Cardiac septum (tissue), 1 donor: ENCODE measurements at regions of chr2 and their contacts with region 1.

Region 1: DNA sequence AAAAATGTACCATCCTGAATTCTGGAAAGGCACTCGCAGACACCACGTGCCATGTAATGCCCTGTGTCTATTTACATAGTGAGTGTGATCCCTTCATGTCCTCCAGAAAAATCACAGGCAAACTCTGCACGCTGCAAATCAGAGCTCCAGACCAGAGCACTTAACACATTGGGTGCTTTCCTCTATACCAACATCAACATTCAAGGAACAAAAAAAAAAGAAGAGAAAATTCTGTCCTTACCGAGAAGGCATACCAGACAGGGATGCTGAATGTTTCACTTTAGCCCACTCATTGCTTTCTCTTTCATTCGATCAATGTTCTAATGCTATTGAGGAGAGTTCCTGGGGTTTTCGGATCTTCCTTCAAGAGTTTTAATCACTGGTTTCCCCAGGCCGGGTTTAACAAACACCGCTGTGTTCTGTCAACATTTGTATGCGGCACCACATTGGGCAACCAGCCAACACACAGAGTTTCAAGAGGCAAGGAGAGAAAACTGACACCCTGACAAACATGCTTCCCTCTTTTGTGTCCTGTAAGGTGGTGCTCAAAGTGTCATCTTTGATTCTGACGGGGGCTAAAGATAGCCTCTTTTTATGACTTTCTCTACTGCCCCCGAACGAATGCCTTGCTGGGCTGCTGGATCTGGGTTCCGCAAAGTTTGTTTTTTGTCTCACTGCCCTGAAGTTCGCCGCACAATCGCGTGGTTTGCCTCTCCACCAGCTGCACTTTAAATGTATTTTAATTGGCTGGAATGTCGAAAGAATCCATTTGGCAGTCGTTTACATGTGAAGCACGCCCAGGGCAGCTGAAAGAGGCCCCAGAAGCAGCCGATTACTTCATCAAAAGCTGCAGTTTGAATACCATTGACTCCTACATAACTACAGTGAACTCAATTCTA is 106.4 kb upstream of the NCKAP5 start:
- DNase-seq: no peak

Region 2: DNA sequence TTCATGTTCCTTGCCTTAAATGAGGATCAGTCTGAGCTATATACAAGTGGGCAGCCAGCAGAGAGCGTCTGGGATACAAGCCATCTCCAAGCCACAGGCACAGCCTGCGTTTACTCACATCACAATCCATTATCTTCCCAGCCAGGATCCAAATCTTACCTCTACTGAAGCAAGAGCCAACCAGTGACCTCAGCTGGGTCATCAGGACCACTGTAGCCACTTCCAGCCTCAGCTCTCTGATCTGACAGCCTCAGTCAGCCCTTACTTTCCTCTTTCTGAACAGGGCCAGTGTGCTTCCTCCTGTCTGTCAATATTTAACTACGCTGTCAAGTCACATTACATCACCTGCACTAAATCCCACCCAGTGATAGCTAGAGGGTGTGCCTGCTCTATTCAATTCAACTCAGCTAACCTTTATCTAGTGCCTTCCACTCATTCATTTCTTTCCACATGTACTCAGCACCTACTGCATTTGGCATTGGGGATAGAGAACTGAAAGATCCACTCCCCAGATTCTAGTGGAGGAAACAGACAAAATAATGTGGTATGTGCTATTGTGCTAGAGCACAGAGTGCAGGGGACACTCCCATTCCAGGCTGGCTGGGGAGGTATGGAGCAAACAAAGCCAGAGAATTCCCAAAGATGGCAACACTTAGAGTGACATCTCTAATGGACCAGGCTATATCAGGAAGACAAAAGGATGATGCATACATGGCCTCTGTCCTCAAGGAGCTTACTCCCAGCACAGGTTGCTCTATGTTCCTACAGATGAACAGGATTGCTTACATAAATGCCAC is 253.0 kb before region 1 on chr2:
- intact Hi-C with region 1: loop called (anchors 10 kb)
- DNase-seq: no peak

Region 3: DNA sequence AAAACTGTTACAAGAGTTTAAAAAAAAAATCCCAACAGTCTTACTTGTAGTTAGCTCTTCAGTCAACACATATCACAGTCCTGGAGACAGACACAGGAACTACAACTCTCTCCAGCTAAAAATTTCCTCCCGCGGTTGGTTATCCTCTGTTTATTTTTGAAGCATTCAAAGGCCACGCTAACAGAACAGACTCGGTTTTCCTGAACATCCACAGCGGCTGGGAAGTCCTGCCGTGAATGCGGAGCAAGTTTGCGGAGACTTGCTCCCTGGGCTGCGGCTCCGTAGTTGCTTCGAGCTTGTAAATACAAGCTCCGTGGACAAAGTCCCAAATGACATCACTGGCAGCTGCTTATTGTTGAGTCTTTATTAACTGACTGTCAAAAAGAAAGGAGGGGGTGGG is 106.5 kb before region 1 on chr2 and contains the start of gene NCKAP5:
- intact Hi-C with region 1: loop called (anchors 5 kb)
- DNase-seq: no peak
- total RNA-seq, gene NCKAP5: 10.6 TPM

Region 4: GRCh38 chr2:133591164-133591563 is 83.5 kb before region 1 on chr2:
- intact Hi-C with region 1: loop called (anchors 10 kb)
- DNase-seq: no peak

Region 5: GRCh38 chr2:133765658-133766057 is 91.0 kb after region 1 on chr2:
- intact Hi-C with region 1: loop called (anchors 5 kb)
- DNase-seq: no peak